ENCODE measurements at regions of chr9 and their contacts with region 1.

Region 1: DNA sequence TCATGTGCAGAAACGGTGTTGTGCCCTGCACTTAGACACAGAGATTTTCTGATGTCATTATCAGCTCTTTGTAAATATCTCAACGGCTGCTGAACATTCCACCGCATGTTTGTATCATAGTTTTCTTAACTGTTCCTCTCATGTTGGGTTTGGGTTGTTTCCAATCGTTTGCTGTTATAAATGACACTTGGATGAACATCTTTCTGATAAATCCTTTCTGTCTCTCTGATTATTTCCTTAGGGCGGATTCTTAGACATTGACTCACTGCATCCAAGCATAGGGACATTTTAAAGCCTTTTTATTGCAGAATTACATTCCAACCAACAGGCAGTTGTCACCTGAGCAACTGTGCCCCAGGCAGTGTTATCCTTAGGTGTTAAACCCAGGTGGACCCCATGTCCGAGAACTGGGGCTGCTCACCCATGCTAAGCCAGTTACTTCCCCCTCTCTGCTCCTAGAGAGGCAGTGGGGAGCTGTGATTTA is 28.5 kb downstream of the COL5A1 start:
- DNase-seq: peak in 1 of 10 donors; percentile 12
- H3K4me3 ChIP-seq: no peak overlapping the region
- H3K27ac ChIP-seq: no peak overlapping the region
- H3K27me3 ChIP-seq: peaks cover 0 to 8% (median 0%) of the 10 kb centered on the region in 45 donors
- CTCF ChIP-seq: no peak

Region 2: DNA sequence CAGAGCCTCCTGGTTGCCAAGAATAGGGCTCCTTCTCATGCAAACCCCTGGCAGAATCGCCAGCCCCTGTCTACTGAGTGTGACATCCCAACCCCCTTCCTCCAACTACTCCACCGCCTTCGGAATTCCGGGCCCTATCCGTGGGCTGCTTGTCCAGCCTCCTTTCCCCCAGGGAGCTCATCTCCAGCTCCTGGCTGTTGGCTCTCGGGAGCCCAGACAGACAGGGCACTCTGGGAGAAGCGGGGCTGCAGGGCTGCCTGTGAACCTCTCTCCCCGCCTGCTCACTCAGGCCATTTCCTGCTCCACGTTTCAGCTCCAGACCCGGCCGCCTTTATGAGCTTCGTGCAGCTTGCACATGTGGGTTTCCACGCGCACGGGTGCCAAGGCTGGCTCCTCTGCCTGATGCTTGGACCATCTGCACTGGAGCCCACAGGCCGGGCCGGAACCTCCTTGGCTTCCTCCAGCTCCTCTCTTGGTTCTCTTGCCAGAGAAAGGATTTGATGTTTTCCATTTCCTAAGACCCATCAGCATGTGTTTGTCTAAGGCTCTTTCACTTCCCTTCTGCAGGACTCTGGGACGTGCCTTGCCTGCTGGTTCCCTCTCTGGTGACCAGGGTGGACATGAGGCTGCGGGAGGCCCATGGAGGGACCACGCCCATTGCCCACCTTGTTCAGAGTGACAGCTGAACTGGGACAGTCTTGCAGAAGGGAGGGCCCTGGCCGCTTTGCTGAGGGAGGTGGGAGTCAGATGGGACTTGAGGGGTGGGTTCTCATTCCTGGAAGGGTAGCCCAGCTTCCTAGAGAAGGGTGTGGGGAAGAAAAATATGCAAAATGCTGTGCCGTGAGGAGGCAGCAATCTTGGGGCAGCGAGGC is 51.9 kb before region 1 on chr9:
- intact Hi-C with region 1: loop called in 1 of 2 experiments (anchors 10 kb)
- DNase-seq: peak in 6 of 10 donors; percentile 17 to 43 (median 33)
- H3K4me3 ChIP-seq: no peak overlapping the region
- H3K27ac ChIP-seq: no peak overlapping the region
- H3K27me3 ChIP-seq: peaks cover 0 to 3% (median 0%) of the 10 kb centered on the region in 45 donors
- CTCF ChIP-seq: no peak

Region 3: GRCh38 chr9:135137398-135137832 is 467.3 kb after region 1 on chr9:
- intact Hi-C with region 1: no loop called
- DNase-seq: peak in 8 of 10 donors; percentile 42 to 81 (median 73)
- H3K4me3 ChIP-seq: no peak overlapping the region
- H3K27ac ChIP-seq: peak overlapping the region in 57 of 59 donors; percentile 45 to 96 (median 87)
- H3K27me3 ChIP-seq: no peaks in the 10 kb centered on the region
- CTCF ChIP-seq: no peak

Measured in dorsolateral prefrontal cortex (tissue), 120 donors.